ENCODE measurements at regions of chr6 and their contacts with region 1.

Region 1: GRCh38 chr6:26122793-26123674 is 35.8 kb downstream of the HFE start:
- DNase-seq: peak; percentile 96 to 98
- ATAC-seq: peak; percentile 84 to 85
- H3K4me3 ChIP-seq: peak overlapping the region; percentile 77 to 96 (median 90)
- H3K27ac ChIP-seq: peak overlapping the region; percentile 94 to 98 (median 95)
- H3K4me1 ChIP-seq: peaks cover 18 to 26% of the 10 kb centered on the region in 2 donors
- H3K27me3 ChIP-seq: no peaks in the 10 kb centered on the region
- CTCF ChIP-seq: no peak
- POLR2A ChIP-seq: peak; percentile 43 to 47

Region 2: DNA sequence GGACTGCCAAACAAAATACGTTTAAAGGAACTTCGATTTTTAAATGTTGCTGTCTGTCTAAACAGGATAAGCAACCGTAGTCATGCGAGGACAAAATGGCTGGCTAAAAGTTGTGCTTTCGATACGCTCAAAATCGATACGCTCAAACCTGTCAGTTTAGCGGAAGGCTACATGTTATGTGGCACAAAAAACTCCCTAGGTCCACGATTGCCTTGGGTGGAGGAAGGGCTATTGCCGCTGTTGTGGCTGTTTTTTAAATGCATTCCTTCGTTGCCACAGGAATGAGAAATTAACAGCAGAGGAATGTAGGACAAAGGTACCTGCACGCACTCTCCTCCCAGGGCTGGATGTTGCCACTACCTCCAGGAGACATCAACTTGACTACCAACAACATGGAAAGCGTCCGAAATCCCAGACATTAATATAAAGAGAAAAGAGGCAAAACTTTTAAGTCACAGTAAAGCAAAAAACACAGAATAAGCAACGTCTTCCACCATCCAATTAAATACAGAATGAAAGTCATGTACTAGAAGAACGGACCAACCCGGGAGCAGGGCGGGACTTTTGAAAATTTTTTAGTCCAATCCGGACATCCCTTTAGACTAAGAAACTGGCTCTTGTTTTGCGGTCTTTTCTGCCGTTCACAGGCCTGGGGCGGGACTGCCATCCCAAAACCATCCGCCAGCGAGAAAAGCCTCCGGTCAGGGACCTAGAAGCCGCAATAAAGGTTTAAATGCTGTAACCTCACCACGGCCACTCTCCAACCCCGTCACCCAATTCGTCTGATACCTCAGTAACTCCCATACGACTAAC is 68.0 kb before region 1 on chr6:
- in situ Hi-C with region 1: no loop called
- intact Hi-C with region 1: loop called (anchors 1 kb)
- DNase-seq: peak; percentile 84 to 86
- ATAC-seq: peak; percentile 76 to 80
- H3K4me3 ChIP-seq: peak overlapping the region; percentile 73 to 87 (median 82)
- H3K27ac ChIP-seq: peak overlapping the region; percentile 87 to 96 (median 90)
- H3K4me1 ChIP-seq: peaks cover 11 to 15% of the 10 kb centered on the region in 2 donors
- H3K27me3 ChIP-seq: no peaks in the 10 kb centered on the region
- CTCF ChIP-seq: peak in 2 of 5 experiments; percentile 14 to 29
- POLR2A ChIP-seq: peak in 1 of 2 donors; percentile 21

Region 3: DNA sequence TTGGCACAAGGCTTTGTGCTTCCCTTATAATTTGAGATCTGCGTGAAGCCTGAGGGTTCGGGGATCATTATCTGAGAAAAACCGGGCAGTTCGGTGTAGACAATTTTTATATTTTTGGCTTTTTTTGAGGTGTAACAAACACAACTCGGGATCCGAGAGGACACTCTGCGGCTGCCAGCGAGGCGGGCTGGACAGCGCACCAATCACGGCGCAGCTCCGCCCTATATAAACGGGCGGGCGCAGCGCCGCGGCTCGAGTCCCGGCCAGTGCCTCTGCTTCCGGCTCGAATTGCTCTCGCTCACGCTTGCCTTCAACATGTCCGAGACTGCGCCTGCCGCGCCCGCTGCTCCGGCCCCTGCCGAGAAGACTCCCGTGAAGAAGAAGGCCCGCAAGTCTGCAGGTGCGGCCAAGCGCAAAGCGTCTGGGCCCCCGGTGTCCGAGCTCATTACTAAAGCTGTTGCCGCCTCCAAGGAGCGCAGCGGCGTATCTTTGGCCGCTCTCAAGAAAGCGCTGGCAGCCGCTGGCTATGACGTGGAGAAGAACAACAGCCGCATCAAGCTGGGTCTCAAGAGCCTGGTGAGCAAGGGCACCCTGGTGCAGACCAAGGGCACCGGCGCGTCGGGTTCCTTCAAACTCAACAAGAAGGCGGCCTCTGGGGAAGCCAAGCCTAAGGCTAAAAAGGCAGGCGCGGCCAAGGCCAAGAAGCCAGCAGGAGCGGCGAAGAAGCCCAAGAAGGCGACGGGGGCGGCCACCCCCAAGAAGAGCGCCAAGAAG is 33.2 kb after region 1 on chr6:
- in situ Hi-C with region 1: loop called in 2 of 4 experiments (anchors 5 kb)
- intact Hi-C with region 1: loop called (anchors 1 kb)
- DNase-seq: peak; percentile 81 to 89
- ATAC-seq: peak; percentile 70 to 76
- H3K4me3 ChIP-seq: peak overlapping the region; percentile 71 to 95 (median 77)
- H3K27ac ChIP-seq: peak overlapping the region; percentile 88 to 97 (median 93)
- H3K4me1 ChIP-seq: peaks cover 11 to 23% of the 10 kb centered on the region in 2 donors
- H3K27me3 ChIP-seq: no peaks in the 10 kb centered on the region
- CTCF ChIP-seq: no peak
- POLR2A ChIP-seq: peak; percentile 99

Region 4: DNA sequence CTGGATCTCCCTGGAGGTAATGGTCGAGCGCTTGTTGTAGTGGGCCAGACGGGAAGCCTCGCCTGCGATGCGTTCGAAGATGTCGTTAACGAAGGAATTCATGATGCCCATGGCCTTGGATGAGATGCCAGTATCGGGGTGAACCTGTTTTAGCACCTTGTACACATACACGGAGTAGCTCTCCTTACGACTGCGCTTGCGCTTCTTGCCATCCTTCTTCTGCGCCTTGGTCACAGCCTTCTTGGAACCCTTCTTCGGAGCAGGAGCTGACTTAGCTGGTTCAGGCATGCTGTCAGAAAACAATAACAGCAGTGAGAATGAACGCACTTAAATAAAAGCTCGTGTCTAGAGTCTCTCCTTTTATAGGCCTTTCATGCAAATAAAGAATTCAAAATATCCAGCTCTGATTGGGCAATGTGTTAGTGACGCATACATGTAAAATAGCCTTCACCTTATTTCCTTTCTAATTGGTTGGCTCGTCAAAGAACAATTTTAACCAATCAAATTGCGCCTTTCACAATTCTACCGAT is 93.4 kb after region 1 on chr6:
- in situ Hi-C with region 1: no loop called
- intact Hi-C with region 1: loop called (anchors 2 kb)
- DNase-seq: no peak
- ATAC-seq: peak; percentile 74 to 84
- H3K4me3 ChIP-seq: peak overlapping the region; percentile 43 to 53 (median 53)
- H3K27ac ChIP-seq: peak overlapping the region; percentile 67 to 79 (median 72)
- H3K4me1 ChIP-seq: peaks cover 0 to 20% of the 10 kb centered on the region in 2 donors
- H3K27me3 ChIP-seq: peaks cover 80 to 86% (median 82%) of the 10 kb centered on the region in 3 donors
- CTCF ChIP-seq: no peak
- POLR2A ChIP-seq: peak; percentile 51 to 82

Region 5: DNA sequence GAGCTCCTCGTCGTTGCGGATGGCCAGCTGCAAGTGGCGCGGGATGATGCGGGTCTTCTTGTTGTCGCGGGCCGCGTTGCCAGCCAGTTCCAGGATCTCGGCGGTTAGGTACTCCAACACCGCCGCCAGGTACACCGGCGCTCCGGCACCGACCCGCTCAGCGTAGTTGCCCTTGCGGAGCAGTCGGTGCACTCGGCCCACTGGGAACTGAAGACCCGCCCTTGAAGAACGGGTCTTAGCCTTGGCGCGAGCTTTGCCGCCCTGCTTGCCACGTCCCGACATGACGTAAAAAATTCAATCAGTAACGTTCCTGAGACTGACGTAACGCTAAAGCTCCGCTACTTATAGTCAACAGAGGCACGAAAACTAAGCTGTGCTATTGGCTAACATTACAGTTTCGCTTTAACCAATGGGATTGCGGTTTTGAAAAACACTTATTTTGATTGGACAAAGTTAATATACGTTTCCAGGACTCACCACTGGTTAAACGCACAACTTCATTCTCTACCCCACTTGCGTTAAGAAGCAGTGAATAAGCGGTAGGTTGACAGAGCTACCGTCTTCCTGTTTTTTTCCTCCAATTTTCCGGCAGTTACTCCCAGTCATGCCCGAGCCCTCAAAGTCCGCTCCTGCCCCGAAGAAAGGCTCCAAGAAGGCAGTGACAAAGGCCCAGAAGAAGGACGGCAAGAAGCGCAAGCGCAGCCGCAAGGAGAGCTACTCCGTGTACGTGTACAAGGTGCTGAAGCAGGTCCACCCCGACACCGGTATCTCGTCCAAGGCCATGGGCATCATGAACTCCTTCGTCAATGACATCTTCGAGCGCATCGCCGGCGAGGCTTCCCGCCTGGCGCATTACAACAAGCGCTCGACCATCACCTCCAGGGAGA is 1715.3 kb after region 1 on chr6:
- in situ Hi-C with region 1: no loop called
- intact Hi-C with region 1: loop called (anchors 2 kb)
- DNase-seq: peak; percentile 52 to 60
- ATAC-seq: peak; percentile 99
- H3K4me3 ChIP-seq: peak overlapping the region; percentile 75 to 91 (median 76)
- H3K27ac ChIP-seq: peak overlapping the region; percentile 89 to 94 (median 93)
- H3K4me1 ChIP-seq: peaks cover 21 to 33% of the 10 kb centered on the region in 2 donors
- H3K27me3 ChIP-seq: no peaks in the 10 kb centered on the region
- CTCF ChIP-seq: peak in 2 of 5 experiments; percentile 7 to 14
- POLR2A ChIP-seq: peak; percentile 81 to 94